ENCODE measurements at regions of chr6 and their contacts with region 1.

Region 1: DNA sequence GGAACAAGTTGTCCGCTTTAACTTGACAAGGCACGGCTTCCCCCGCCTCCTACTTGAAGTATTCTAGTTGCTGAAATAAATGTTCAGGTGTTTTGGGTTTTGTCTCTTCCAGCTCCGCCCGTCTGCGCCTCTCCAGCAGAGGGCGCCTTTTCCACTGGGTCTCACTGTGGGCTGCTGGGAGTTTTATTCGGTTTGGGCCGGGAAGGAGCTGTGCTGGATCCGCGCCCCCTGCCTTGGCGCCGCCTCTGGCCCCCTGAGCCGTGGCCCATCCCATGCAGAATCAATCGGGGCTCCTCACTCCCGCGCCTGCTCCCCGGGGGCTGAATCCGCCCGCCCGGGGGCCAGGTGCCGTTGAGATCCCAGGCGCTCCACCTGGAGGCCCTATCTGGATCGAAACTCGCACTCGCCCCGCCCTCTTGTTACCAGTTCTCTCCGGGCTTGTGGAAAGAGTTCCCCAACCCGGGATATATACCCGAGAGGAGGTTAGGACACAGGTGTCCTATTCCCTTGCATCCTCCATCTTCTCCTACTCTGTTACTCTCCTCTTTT is 51.0 kb upstream of the TCF21 start:
- DNase-seq: peak; percentile 90
- ATAC-seq: peak; percentile 96
- H3K4me3 Mint-ChIP-seq: peak overlapping the region; percentile 66
- H3K27ac Mint-ChIP-seq: peak overlapping the region; percentile 91
- H3K4me1 Mint-ChIP-seq: peaks cover 26% of the 10 kb centered on the region
- H3K27me3 Mint-ChIP-seq: no peaks in the 10 kb centered on the region
- CTCF ChIP-seq: peak; percentile 90

Region 2: DNA sequence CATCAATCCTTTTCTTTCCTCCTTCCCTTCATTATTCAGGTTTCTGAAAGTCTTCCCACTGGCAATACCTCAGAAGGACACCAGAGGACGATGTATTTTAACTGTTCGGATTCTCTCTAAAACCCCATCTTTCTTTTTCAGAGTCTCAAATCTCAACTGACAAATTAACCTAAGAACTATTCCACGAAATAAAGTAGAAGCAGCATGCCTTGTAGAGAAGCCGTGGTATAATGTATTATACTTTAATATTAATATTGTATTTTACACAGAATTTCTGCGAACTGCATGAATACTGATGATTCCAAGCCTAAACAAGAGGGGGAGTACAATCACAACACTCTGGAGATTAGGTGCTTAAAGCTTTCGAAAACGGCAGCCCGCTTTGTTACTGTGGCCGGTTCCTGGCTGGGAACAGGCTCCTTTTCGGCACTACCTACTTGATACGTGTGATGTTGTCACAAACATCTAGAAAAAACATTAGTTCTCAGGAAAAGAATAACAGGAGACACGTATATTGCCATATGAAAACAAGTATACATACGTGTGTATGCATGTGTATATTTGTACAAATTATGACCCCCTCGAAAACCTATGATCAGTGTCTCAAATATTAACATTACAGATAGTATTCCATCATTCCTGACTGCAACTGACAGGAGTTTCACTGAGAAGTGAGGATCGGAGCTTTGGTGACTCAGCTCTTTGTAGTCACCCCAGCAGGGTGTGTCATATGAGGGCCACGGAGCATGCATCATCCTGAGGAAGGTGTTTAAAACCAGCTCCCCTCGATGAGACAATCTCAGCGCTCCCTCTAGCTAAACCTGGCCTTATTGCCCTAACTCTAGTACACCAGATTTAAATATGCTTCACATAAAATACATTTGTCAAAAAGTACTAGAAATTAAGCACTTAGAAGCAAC is 268.6 kb before region 1 on chr6:
- CTCF ChIA-PET with region 1: interaction called, 31 read pairs
- POLR2A ChIA-PET with region 1: no interaction called
- DNase-seq: peak; percentile 36
- ATAC-seq: peak; percentile 90
- H3K4me3 Mint-ChIP-seq: peak overlapping the region; percentile 77
- H3K27ac Mint-ChIP-seq: peak overlapping the region; percentile 92
- H3K4me1 Mint-ChIP-seq: peaks cover 7% of the 10 kb centered on the region
- H3K27me3 Mint-ChIP-seq: no peaks in the 10 kb centered on the region
- CTCF ChIP-seq: peak; percentile 78

Region 3: DNA sequence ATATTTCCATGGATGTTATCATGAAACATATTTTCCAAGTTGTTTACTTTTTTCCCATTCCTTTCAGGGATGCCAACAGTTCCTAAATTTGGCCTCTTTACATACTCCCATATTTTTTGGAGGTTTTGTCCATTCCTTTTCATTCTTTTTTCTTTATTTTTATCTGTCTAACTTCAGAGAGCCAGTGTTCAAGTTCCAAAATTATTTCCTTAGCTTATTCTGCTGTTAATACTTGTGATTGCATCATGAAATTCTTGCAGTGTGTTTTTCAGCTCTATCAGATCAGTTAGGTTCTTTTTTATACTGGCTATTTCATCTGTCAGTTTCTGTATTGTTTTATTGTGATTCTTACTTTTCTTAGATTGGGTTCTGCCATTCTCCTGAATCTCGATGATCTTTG is 38.8 kb before region 1 on chr6:
- CTCF ChIA-PET with region 1: no interaction called
- POLR2A ChIA-PET with region 1: no interaction called
- DNase-seq: no peak
- ATAC-seq: no peak
- H3K4me3 Mint-ChIP-seq: no peak overlapping the region
- H3K27ac Mint-ChIP-seq: no peak overlapping the region
- H3K4me1 Mint-ChIP-seq: no peaks in the 10 kb centered on the region
- H3K27me3 Mint-ChIP-seq: no peaks in the 10 kb centered on the region
- CTCF ChIP-seq: no peak

Region 4: DNA sequence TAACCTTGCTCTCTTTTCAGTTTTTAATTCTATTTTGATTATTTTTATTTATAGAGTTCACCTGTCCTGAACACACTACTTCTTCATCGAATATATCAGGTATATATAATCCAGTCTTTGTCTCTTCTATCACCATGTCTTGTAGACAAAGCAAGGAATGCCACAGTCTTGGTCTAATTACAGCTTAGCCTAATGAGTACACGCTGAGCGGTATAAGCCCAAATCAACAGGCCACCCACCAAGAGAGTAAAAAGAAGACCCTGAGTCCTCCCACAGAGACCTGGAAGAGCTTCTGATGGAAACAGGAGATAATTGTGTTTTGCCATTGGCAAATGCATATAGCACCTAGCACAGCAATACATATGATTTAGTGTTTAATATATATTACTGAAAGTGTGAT is 17.7 kb before region 1 on chr6:
- CTCF ChIA-PET with region 1: interaction called, 12 read pairs
- POLR2A ChIA-PET with region 1: no interaction called
- DNase-seq: no peak
- ATAC-seq: peak; percentile 70
- H3K4me3 Mint-ChIP-seq: no peak overlapping the region
- H3K27ac Mint-ChIP-seq: no peak overlapping the region
- H3K4me1 Mint-ChIP-seq: 0 out of 2 replicates have a peak, but pooled peaks cover 4% of the 10 kb centered on the region
- H3K27me3 Mint-ChIP-seq: no peaks in the 10 kb centered on the region
- CTCF ChIP-seq: no peak

Region 5: GRCh38 chr6:133854364-133855275 is 16.7 kb after region 1 on chr6:
- CTCF ChIA-PET with region 1: interaction called, 16 read pairs
- POLR2A ChIA-PET with region 1: interaction called, 3 read pairs
- DNase-seq: peak; percentile 59
- ATAC-seq: peak; percentile 79
- H3K4me3 Mint-ChIP-seq: peak overlapping the region; percentile 87
- H3K27ac Mint-ChIP-seq: no peak overlapping the region
- H3K4me1 Mint-ChIP-seq: peaks cover 26% of the 10 kb centered on the region
- H3K27me3 Mint-ChIP-seq: peaks cover 38% of the 10 kb centered on the region
- CTCF ChIP-seq: no peak

Region 6: GRCh38 chr6:133916650-133917151 is 78.8 kb after region 1 on chr6:
- CTCF ChIA-PET with region 1: interaction called, 98 read pairs
- POLR2A ChIA-PET with region 1: interaction called, 3 read pairs
- DNase-seq: peak; percentile 99
- ATAC-seq: peak; percentile 78
- H3K4me3 Mint-ChIP-seq: peak overlapping the region; percentile 53
- H3K27ac Mint-ChIP-seq: peak overlapping the region; percentile 92
- H3K4me1 Mint-ChIP-seq: peaks cover 27% of the 10 kb centered on the region
- H3K27me3 Mint-ChIP-seq: no peaks in the 10 kb centered on the region
- CTCF ChIP-seq: peak; percentile 92

Measured in WTC11 (cell line).